ENCODE measurements at regions of chr6 and their contacts with region 1.

Region 1: GRCh38 chr6:30656513-30656912 is 9.6 kb downstream of the C6orf136 start:
- H3K4me3 ChIP-seq: no peak overlapping the region
- H3K27ac ChIP-seq: no peak overlapping the region
- H3K4me1 ChIP-seq: no peaks in the 10 kb centered on the region
- CTCF ChIP-seq: no peak

Region 2: GRCh38 chr6:30344191-30344867 is 312.2 kb before region 1 on chr6:
- CTCF ChIA-PET with region 1: no interaction called
- POLR2A ChIA-PET with region 1: no interaction called
- H3K4me3 ChIP-seq: no peak overlapping the region
- H3K27ac ChIP-seq: no peak overlapping the region
- H3K4me1 ChIP-seq: peaks cover 3% of the 10 kb centered on the region; the same call in 1 of the 2 replicates
- CTCF ChIP-seq: no peak

Region 3: DNA sequence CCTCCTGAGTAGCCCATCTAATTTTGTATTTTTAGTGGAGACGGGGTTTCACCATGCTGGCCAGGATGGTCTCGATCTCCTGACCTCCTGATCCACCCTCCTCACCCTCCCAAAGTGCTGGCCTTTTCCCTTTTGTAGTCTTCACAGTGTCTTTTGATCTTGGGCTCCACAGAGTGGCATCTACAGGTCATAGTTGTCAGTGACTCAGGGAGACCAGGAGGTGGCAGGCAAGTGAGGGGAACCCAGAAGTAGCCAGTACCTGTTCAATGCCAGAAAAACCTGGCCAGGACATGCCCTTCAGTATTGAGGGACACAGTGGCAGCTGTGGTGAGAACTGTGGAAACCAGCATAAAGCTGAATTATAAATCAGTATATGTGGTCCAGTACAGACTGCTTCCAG is 291.9 kb before region 1 on chr6:
- CTCF ChIA-PET with region 1: no interaction called
- POLR2A ChIA-PET with region 1: no interaction called
- H3K4me3 ChIP-seq: no peak overlapping the region
- H3K27ac ChIP-seq: no peak overlapping the region
- H3K4me1 ChIP-seq: no peaks in the 10 kb centered on the region
- CTCF ChIP-seq: peak; percentile 17; the same call in 1 of the 2 replicates

Region 4: GRCh38 chr6:30418448-30418847 is 238.1 kb before region 1 on chr6:
- CTCF ChIA-PET with region 1: no interaction called
- POLR2A ChIA-PET with region 1: no interaction called
- H3K4me3 ChIP-seq: no peak overlapping the region
- H3K27ac ChIP-seq: no peak overlapping the region
- H3K4me1 ChIP-seq: no peaks in the 10 kb centered on the region
- CTCF ChIP-seq: no peak

Region 5: GRCh38 chr6:30672445-30673253 is 16.1 kb after region 1 on chr6 and contains the start of gene DHX16:
- CTCF ChIA-PET with region 1: interaction called, 18 read pairs
- POLR2A ChIA-PET with region 1: interaction called, 5 read pairs
- H3K4me3 ChIP-seq: peak within 1 kb of the TSS; percentile 60
- H3K27ac ChIP-seq: peak within 1 kb of the TSS; percentile 54; the same call in 1 of the 2 replicates
- H3K4me1 ChIP-seq: 0 out of 2 replicates have a peak, but pooled peaks cover 3% of the 10 kb centered on the region
- CTCF ChIP-seq: peak; percentile 81; the same call in 1 of the 2 replicates

Region 6: DNA sequence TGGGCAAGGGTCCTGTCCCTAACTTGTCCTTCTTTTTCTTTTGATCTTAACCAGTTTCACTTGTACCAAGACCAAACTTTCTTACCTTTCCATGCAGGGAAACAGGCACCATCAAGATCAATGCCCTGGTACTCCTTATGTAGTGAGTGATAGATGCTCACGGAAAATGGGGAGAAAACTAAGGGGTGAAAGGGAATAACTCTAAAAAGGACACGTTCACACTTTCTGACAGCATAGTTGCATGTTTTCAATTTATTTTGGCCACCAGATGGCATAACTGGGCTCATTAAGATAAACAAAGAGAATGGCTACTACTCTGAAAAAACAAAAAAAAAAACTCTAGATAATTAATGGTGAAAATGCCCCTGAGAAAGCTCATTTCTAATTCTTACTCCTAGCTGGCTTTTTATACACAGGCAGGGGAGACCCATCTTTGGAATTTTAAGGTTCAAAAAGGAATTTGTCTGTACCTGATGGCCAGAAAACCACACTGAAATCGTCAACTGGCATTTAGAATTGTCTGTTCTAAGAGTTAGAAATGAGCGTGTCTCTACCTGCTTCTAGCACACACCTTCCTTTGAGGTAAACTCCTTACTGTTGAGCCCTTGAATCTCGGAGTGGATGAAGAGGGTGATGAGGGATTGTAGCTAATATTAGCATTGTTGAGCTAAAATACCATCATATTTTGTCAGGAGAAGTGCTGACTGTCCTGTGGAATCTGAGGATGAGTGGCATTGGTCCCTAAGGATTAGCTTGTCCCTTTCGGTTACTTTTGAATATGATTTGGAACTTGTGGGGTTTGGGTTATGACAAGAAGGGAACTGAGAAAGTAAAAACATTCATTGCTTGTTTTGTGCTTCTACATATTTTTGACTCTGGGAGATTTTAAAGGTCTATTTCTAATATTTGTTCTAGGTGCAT is 165.6 kb after region 1 on chr6:
- CTCF ChIA-PET with region 1: no interaction called
- POLR2A ChIA-PET with region 1: no interaction called
- H3K4me3 ChIP-seq: no peak overlapping the region
- H3K27ac ChIP-seq: no peak overlapping the region
- H3K4me1 ChIP-seq: peaks cover 9% of the 10 kb centered on the region; the same call in 1 of the 2 replicates
- CTCF ChIP-seq: peak; percentile 53; the same call in 1 of the 2 replicates

Measured in HEK293 (cell line).